Caco-2 (cell line): ENCODE measurements at regions of chr20 and their contacts with region 1.

Region 1: GRCh38 chr20:48620519-48621254 is 207.1 kb downstream of the PREX1 start:
- DNase-seq: peak; percentile 94 to 98
- H3K4me3 ChIP-seq: peak overlapping the region; percentile 20
- H3K4me3 Mint-ChIP-seq: peak overlapping the region; percentile 70
- H3K27ac Mint-ChIP-seq: peak overlapping the region; percentile 31
- H3K4me1 ChIP-seq: peaks cover 11% of the 10 kb centered on the region
- H3K4me1 Mint-ChIP-seq: peaks cover 6% of the 10 kb centered on the region
- H3K27me3 ChIP-seq: no peaks in the 10 kb centered on the region
- H3K27me3 Mint-ChIP-seq: no peaks in the 10 kb centered on the region
- CTCF ChIP-seq: peak; percentile 99 to 100

Region 2: GRCh38 chr20:47677635-47678453 is 942.8 kb before region 1 on chr20:
- CTCF ChIA-PET with region 1: interaction called, 33 read pairs
- POLR2A ChIA-PET with region 1: no interaction called
- intact Hi-C with region 1: loop called (anchors 1 kb)
- DNase-seq: peak; percentile 87 to 93
- H3K4me3 ChIP-seq: no peak overlapping the region
- H3K4me3 Mint-ChIP-seq: no peak overlapping the region
- H3K27ac Mint-ChIP-seq: peak overlapping the region; percentile 31
- H3K4me1 ChIP-seq: peaks cover 27% of the 10 kb centered on the region
- H3K4me1 Mint-ChIP-seq: no peaks in the 10 kb centered on the region
- H3K27me3 ChIP-seq: no peaks in the 10 kb centered on the region
- H3K27me3 Mint-ChIP-seq: no peaks in the 10 kb centered on the region
- CTCF ChIP-seq: peak; percentile 99 to 100

Region 3: DNA sequence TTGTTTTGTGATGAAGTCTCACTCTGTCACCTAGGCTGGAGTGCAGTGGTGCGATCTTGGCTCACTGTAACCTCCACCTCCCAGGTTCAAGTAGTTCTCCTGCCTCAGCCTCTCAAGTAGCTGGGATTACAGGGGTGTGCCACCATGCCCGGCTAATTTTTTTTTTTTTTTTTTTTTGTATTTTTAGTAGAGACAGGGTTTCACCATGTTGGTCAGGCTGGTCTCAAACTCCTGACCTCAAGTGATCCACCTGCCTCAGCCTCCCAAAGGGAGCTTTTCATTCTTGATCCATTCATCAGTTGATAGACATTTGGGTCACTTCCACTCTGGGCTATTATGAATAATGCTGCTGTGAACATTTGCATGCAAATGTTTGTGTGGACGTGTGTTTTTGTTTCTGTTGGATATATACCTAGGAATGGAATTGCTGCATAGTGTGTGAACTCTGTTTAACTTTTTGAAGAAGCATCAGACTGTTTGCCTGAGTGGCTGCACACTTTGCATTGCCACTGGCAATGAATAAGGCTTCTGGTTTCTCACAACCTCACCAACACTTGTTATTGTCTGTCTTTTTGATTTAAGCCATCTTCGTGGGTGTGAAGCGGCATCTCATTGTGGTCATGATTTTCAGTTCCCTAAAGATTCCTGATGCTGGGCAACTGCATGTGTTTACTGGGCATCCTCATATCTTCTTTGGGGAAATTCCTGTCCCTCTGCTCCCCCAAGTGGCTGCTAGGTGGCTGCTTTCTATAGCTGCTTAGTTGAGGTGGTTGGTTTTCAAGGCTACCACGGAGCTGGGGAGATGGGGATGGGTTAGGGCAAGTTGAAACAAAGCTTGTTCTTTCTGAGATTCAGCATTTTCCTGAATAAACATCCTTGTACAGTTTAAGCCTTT is 431.8 kb before region 1 on chr20:
- CTCF ChIA-PET with region 1: interaction called, 5 read pairs
- POLR2A ChIA-PET with region 1: no interaction called
- intact Hi-C with region 1: loop called (anchors 1 kb)
- DNase-seq: peak; percentile 67
- H3K4me3 ChIP-seq: no peak overlapping the region
- H3K4me3 Mint-ChIP-seq: no peak overlapping the region
- H3K27ac Mint-ChIP-seq: no peak overlapping the region
- H3K4me1 ChIP-seq: peaks cover 18% of the 10 kb centered on the region
- H3K4me1 Mint-ChIP-seq: peaks cover 26% of the 10 kb centered on the region
- H3K27me3 ChIP-seq: no peaks in the 10 kb centered on the region
- H3K27me3 Mint-ChIP-seq: no peaks in the 10 kb centered on the region
- CTCF ChIP-seq: peak; percentile 45 to 90

Region 4: DNA sequence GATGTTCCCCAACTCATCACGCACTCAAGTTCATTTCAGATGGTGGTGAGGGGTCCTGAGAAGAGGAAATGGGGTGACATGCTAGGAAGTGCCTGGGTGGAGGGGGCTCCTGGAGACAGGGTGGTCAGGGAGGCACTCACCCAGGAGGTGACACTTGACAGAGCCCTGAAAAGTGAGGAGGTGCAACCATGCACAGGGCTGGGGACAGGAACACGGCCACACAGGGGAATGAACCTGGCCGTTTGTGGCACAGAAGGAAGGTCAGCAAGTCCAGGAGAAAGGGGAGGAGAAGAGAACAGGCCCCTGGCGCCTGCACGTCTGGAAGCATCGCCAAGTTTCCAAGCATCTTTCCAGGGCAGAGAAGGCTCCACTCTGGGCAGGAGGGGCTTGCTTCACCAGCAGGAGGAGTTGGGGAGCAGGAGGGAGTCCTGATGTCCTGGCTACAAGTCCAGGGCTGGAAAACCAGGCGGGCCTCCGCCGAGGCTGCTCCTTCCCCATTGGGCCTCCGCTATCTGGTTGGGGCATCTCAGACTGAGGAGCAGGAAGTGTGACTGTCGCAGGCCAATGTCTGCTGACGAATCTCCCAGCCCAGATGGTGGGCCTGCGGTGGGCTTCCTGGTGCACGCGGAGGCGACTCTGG is 214.9 kb before region 1 on chr20:
- CTCF ChIA-PET with region 1: interaction called, 42 read pairs
- POLR2A ChIA-PET with region 1: no interaction called
- intact Hi-C with region 1: no loop called
- DNase-seq: peak in 1 of 2 experiments; percentile 47
- H3K4me3 ChIP-seq: no peak overlapping the region
- H3K4me3 Mint-ChIP-seq: no peak overlapping the region
- H3K27ac Mint-ChIP-seq: no peak overlapping the region
- H3K4me1 ChIP-seq: peaks cover 2% of the 10 kb centered on the region; the same call in 1 of the 2 replicates
- H3K4me1 Mint-ChIP-seq: no peaks in the 10 kb centered on the region
- H3K27me3 ChIP-seq: no peaks in the 10 kb centered on the region
- H3K27me3 Mint-ChIP-seq: no peaks in the 10 kb centered on the region
- CTCF ChIP-seq: no peak

Region 5: DNA sequence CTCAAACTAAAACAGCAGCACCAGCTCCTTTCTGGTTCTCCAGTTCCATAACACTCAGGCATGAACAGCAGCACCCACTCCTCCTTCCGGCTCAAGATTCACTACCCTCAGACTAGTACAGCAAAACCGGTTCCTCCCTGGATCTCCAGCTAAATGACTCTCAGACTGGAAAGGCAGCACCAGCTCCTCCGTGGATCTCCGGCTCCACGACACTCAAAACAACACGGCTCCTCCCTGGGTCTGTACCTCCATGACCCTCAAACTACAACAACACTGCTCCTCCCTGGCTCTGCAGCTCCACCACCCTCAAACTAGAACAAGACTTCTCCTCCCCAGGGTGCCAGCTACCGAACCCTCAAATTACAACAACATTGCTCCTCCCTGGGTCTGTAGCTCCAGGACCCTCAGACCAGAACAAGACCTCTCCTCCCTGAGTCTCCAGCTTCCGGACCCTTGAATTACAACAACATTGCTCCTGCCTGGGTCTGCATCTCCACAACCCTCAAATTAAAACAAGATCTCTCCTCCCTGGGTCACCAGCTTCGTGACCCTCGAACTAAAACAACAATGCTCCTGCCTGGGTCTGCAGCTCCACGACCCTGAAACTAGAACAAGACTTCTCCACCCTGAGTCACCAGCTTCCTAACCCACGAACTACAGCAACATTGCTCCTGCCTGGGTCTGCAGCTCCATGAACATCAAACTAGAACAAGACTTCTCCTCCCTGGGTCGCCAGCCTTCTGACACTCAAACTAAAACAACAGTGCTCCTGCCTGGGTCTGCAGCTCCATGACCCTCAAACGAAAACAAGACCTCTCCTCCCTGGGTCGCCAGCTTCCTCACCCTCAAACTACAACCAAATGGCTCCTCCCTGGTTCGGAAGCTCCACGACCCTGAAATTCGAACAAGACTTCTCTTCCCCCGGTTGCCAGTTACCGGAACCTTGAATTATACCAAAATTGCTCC is 117.6 kb before region 1 on chr20:
- CTCF ChIA-PET with region 1: interaction called, 16 read pairs
- POLR2A ChIA-PET with region 1: no interaction called
- intact Hi-C with region 1: no loop called
- DNase-seq: no peak
- H3K4me3 ChIP-seq: no peak overlapping the region
- H3K4me3 Mint-ChIP-seq: no peak overlapping the region
- H3K27ac Mint-ChIP-seq: no peak overlapping the region
- H3K4me1 ChIP-seq: no peaks in the 10 kb centered on the region
- H3K4me1 Mint-ChIP-seq: peaks cover 5% of the 10 kb centered on the region
- H3K27me3 ChIP-seq: no peaks in the 10 kb centered on the region
- H3K27me3 Mint-ChIP-seq: peaks cover 37% of the 10 kb centered on the region
- CTCF ChIP-seq: no peak

Region 6: DNA sequence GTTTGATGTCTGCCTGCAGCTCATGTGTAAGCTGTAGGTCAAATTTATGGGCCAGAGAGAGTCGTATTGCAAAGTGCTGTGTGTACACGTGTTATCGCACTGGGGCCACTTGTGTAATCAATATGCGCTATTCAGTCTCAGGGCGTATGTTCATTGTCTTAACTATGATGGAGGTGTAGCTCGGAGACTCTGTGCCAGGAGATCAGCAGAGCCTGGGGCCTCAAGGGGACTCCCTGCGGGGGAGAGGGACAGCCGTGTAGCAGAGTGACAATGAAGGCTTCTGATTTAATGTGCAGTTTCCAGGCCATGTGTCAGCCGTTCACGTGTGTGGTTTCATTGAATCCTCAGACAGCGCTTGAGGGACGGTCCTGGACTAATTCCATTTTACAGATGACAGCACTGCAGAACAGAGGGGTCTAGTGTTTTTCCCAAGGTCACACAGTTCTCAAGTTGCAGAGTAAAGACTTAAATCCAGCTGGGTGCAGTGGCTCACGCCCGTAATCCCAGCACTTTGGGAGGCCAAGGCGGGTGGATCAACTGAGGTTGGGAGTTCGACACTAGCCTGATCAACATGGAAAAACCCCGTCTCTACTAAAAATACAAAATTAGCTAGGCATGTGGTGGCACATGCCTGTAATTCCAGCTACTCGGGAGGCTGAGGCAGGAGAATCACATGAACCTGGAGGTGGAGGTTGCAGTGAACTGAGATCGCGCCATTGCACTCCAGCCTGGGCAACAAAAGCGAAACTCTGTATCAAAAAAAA is 35.4 kb before region 1 on chr20:
- CTCF ChIA-PET with region 1: interaction called, 13 read pairs
- POLR2A ChIA-PET with region 1: interaction called, 3 read pairs
- intact Hi-C with region 1: no loop called
- DNase-seq: peak; percentile 70 to 83
- H3K4me3 ChIP-seq: no peak overlapping the region
- H3K4me3 Mint-ChIP-seq: peak overlapping the region; percentile 2
- H3K27ac Mint-ChIP-seq: peak overlapping the region; percentile 5
- H3K4me1 ChIP-seq: peaks cover 13% of the 10 kb centered on the region
- H3K4me1 Mint-ChIP-seq: peaks cover 12% of the 10 kb centered on the region
- H3K27me3 ChIP-seq: no peaks in the 10 kb centered on the region
- H3K27me3 Mint-ChIP-seq: no peaks in the 10 kb centered on the region
- CTCF ChIP-seq: no peak

Region 7: GRCh38 chr20:48685861-48686771 is 65.4 kb after region 1 on chr20:
- CTCF ChIA-PET with region 1: no interaction called
- POLR2A ChIA-PET with region 1: no interaction called
- intact Hi-C with region 1: no loop called
- DNase-seq: no peak
- H3K4me3 ChIP-seq: no peak overlapping the region
- H3K4me3 Mint-ChIP-seq: no peak overlapping the region
- H3K27ac Mint-ChIP-seq: no peak overlapping the region
- H3K4me1 ChIP-seq: peaks cover 8% of the 10 kb centered on the region; the same call in 1 of the 2 replicates
- H3K4me1 Mint-ChIP-seq: no peaks in the 10 kb centered on the region
- H3K27me3 ChIP-seq: no peaks in the 10 kb centered on the region
- H3K27me3 Mint-ChIP-seq: no peaks in the 10 kb centered on the region
- CTCF ChIP-seq: no peak